K562 (cell line): ENCODE measurements at regions of chr1 and their contacts with region 1.

Region 1: DNA sequence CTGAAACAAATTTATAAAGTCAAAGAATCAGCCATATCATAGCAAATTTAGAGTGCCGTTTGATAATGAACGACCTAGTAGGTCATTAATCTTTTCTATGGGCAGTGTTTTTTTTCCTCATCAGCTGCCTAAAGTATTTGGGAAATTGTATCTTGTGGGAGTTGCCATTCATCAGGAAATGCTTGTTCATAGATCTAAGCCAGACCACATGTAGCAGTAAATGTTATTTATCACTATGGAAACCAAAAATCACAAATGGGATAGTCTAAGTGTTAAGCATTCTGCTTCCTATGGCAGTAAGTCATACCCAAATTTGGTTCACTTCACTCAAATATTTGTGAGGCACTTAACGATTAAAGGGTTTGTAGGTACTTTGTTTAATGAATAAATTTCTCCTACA is 52.9 kb downstream of the LRRC8D start:
- DNase-seq: no peak
- ATAC-seq: peak; percentile 16; the same call in 1 of the 3 replicates
- H3K4me3 ChIP-seq: no peak overlapping the region
- H3K27ac ChIP-seq: peak overlapping the region; percentile 2; the same call in 1 of the 3 replicates
- H3K4me1 ChIP-seq: peaks cover 13 to 61% of the 10 kb centered on the region in 2 experiments
- H3K27me3 ChIP-seq: no peaks in the 10 kb centered on the region
- CTCF ChIP-seq: no peak
- EP300 ChIP-seq: no peak
- POLR2A ChIP-seq: no peak
- RAD21 ChIP-seq: no peak

Region 2: DNA sequence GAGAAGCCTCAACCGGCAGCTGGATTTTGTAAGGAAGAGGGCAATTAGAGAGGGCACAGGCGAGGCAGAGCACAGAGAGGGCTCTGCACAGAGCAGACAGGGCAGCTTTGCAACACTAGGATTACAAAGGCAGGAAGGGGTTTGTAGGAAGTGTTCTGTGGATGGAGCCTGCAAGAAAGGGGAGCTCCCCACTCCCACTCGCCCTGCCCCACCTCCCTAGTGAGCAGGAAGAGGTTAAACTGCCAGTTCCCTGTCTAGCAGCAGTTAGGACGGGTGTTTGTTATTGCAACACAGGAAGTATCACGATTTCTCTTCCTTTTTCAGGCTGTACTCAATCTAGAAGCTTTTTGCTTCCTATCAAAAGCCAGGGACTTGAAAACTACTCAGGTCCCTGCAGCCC is 116.2 kb before region 1 on chr1:
- CTCF ChIA-PET with region 1: no interaction called
- POLR2A ChIA-PET with region 1: no interaction called
- in situ Hi-C with region 1: no loop called
- intact Hi-C with region 1: no loop called
- DNase-seq: no peak
- ATAC-seq: peak; percentile 50
- H3K4me3 ChIP-seq: no peak overlapping the region
- H3K27ac ChIP-seq: no peak overlapping the region
- H3K4me1 ChIP-seq: peaks cover 3 to 6% of the 10 kb centered on the region in 2 experiments; a peak in 4 of 5 replicates
- H3K27me3 ChIP-seq: no peaks in the 10 kb centered on the region; a peak in 1 of 5 replicates
- CTCF ChIP-seq: no peak
- EP300 ChIP-seq: peak; percentile 36; the same call in 1 of the 2 replicates
- POLR2A ChIP-seq: no peak
- RAD21 ChIP-seq: no peak

Region 3: DNA sequence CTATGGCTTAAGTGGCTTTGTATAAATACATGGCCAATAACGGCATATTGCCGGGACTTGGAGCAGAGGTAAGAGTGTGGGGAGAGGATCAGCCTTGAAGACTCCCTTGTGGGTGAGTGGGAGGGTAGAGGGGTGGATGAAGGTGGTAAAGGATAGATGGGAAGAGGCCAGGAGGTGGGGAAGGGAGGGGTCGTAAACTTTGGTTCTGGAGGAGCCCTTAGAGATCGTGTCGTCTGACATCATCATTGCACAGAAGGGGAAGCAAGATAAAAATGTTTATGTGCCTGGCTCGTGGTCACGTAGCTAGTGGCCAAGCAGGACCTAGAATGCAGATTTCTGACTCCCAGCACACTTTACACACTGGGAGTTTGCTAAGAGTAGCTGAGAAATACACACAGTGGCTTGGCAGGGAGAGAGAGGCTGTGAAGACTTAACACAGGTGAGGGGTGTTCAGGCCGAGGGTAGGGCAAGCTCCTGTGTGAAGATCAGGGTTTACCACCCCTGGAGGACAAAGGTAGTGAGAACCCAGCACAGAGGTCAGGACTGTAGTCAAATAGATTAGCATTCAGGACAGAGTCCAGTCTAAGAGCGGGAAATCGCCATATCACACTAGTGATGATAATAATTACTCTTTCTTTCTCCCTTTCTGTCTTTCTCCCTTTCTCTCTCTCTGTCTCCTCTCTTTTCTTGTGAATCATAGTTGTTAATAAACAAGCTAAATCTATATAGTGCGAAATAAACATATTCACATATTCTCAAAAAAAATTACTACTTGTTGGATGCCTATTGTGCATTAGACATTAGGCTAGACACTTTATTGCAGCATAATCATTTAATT is 22.6 kb after region 1 on chr1:
- CTCF ChIA-PET with region 1: no interaction called
- POLR2A ChIA-PET with region 1: interaction called, 5 read pairs
- in situ Hi-C with region 1: no loop called
- intact Hi-C with region 1: loop called (anchors 2 kb)
- DNase-seq: peak; percentile 82 to 96 (median 87)
- ATAC-seq: peak; percentile 84
- H3K4me3 ChIP-seq: peak overlapping the region; percentile 9; the same call in 1 of the 2 replicates
- H3K27ac ChIP-seq: peak overlapping the region; percentile 99
- H3K4me1 ChIP-seq: peaks cover 27 to 94% of the 10 kb centered on the region in 2 experiments
- H3K27me3 ChIP-seq: no peaks in the 10 kb centered on the region
- CTCF ChIP-seq: peak in 1 of 3 experiments; percentile 9; a peak in 1 of 6 replicates
- EP300 ChIP-seq: peak; percentile 91
- POLR2A ChIP-seq: peak; percentile 65; the same call in 1 of the 2 replicates
- RAD21 ChIP-seq: peak in 1 of 2 experiments; percentile 21; a peak in 1 of 4 replicates

Region 4: DNA sequence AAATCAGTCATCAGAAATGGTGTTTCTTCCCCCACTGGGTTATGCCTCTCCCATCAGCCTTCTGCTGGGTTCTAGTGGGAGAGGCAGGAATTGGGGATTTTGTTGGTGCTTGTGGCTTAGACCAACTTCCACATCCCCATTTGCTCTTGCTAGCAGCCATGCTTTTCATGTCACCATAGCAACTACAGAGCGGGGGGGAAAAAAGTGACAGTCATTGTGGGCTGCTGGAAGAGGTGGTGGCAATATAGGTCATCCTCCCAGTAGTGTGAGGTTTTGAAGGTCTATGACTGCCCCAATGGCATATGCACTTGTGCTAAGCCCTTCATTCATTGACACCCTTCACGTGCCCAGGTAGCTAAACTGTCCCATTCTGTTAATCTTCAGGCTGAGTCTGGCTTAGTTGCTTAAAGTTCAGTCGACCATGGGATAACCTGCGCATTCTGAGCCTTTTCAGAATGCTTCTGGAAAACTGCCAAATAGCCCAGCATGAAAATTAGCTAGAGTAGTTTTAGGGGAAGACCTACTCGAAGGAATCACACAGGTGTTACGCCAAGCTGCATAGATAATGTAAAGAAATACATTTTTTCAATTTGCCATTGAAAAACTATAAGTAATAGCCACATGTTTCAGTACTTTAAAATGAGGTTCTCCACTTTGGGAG is 67.5 kb after region 1 on chr1:
- CTCF ChIA-PET with region 1: no interaction called
- POLR2A ChIA-PET with region 1: no interaction called
- in situ Hi-C with region 1: no loop called
- intact Hi-C with region 1: loop called (anchors 2 kb)
- DNase-seq: peak; percentile 30 to 78 (median 54)
- ATAC-seq: peak; percentile 82
- H3K4me3 ChIP-seq: no peak overlapping the region
- H3K27ac ChIP-seq: peak overlapping the region; percentile 41; the same call in 1 of the 3 replicates
- H3K4me1 ChIP-seq: peaks cover 4 to 52% of the 10 kb centered on the region in 2 experiments; a peak in 4 of 5 replicates
- H3K27me3 ChIP-seq: no peaks in the 10 kb centered on the region
- CTCF ChIP-seq: no peak
- EP300 ChIP-seq: peak; percentile 24; the same call in 1 of the 2 replicates
- POLR2A ChIP-seq: no peak
- RAD21 ChIP-seq: no peak